ENCODE measurements at regions of chr10 and their contacts with region 1.

Region 1: DNA sequence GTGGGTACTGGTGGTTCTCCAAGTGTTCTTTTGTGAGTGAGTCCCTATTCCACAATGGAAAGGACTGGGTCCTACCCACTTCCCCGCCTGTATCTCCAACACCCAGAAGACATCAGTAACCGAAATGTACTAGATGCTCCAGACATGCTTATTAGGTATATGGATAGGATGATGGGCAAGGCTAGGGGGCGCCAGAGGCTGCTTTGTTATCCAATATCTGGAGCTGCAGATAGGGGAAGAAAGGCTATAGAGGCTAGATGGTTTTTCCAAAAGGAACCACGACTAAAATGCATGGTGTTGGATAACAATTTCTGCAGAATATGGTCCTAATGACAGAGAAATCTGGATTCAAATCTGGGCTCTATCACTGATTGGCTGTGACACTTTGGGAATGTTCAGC is 56.2 kb upstream of the TM9SF3 start:
- DNase-seq: peak; percentile 92
- H3K4me3 Mint-ChIP-seq: no peak overlapping the region
- H3K27ac Mint-ChIP-seq: no peak overlapping the region
- H3K4me1 Mint-ChIP-seq: peaks cover 14% of the 10 kb centered on the region
- H3K27me3 Mint-ChIP-seq: no peaks in the 10 kb centered on the region

Region 2: DNA sequence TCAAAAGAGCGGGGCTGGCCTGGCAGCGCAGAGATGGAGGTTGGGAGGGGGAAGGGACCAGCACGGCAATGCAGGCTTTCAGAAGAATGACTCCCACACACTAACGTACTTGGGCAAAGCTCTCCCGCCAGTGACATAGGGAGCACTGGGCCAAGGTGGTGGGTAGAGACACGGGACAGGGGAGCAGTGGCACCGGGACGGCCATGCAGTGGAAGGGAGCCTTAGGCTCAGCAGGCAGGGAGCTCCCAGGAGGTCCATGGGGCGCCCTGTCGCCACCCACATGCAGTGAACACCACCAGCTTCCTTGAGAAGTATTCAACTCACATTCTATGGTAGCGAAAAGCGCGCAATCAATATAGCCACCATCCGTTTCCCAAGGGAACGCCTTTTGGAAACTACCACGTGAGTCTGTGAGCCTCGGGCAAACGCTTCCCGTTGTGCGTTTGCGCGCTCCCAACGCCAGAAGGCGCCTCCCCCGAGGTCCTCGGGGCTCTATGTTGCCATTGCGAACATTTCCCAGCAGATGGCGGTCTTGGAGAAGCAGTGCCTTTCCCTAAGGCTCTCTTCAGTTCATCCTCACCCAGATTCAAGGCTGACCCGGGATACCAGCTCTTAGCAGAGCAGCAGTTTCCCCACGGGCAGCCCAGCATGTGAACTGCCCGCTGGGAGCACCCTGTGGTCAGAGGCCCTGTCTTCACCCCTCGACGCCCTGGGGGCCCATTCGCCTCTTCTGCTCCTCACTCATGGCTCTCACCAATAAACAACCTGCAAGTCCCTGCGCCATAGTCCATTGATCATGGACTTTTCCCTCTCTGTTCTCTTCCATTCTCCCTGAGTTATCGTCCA is 267.8 kb before region 1 on chr10:
- CTCF ChIA-PET with region 1: interaction called, 5 read pairs
- intact Hi-C with region 1: loop called (anchors 2 kb)
- DNase-seq: peak; percentile 89
- H3K4me3 Mint-ChIP-seq: peak overlapping the region; percentile 74
- H3K27ac Mint-ChIP-seq: no peak overlapping the region
- H3K4me1 Mint-ChIP-seq: peaks cover 6% of the 10 kb centered on the region
- H3K27me3 Mint-ChIP-seq: peaks cover 3% of the 10 kb centered on the region

Region 3: GRCh38 chr10:96695366-96695765 is 52.4 kb after region 1 on chr10:
- CTCF ChIA-PET with region 1: no interaction called
- intact Hi-C with region 1: loop called (anchors 1 kb)
- DNase-seq: peak; percentile 55
- H3K4me3 Mint-ChIP-seq: no peak overlapping the region
- H3K27ac Mint-ChIP-seq: peak overlapping the region; percentile 68
- H3K4me1 Mint-ChIP-seq: peaks cover 23% of the 10 kb centered on the region
- H3K27me3 Mint-ChIP-seq: no peaks in the 10 kb centered on the region

Region 4: DNA sequence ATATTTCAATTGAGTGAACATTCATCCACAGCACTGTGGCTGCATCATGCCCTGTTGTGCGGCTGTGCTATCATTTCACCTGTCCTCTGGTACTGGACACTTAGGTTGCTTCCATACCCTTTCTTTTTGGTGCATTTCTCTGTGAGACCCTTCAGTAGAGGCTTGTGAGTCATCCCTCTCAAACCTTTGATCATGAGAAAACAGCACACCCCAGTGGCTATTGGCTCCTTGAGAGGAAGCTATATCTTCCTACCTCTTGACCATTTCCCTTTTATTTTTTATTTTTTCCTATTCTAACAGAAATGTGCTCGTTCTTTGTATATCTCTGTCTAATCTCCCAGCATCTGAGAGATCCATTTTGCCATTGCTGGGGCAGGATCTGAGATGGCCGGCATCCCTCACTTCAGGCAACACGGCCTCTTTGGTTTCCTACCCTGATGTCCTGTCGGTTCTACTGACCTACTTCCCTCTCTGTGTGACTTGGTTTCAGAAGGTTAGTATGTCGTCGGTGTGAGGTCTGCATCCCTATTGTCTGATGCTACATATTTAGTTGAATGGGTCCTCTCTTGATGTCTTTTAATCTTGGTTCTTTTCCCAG is 101.1 kb after region 1 on chr10:
- CTCF ChIA-PET with region 1: interaction called, 3 read pairs
- intact Hi-C with region 1: loop called (anchors 2 kb)
- DNase-seq: no peak
- H3K4me3 Mint-ChIP-seq: no peak overlapping the region
- H3K27ac Mint-ChIP-seq: no peak overlapping the region
- H3K4me1 Mint-ChIP-seq: peaks cover 6% of the 10 kb centered on the region
- H3K27me3 Mint-ChIP-seq: no peaks in the 10 kb centered on the region

Region 5: GRCh38 chr10:96910488-96911395 is 267.8 kb after region 1 on chr10:
- CTCF ChIA-PET with region 1: no interaction called
- intact Hi-C with region 1: loop called (anchors 5 kb)
- DNase-seq: peak; percentile 29
- H3K4me3 Mint-ChIP-seq: no peak overlapping the region
- H3K27ac Mint-ChIP-seq: no peak overlapping the region
- H3K4me1 Mint-ChIP-seq: peaks cover 20% of the 10 kb centered on the region
- H3K27me3 Mint-ChIP-seq: no peaks in the 10 kb centered on the region

Region 6: GRCh38 chr10:97318772-97319651 is 676.0 kb after region 1 on chr10 and contains the start of gene FRAT1:
- CTCF ChIA-PET with region 1: no interaction called
- intact Hi-C with region 1: no loop called
- DNase-seq: peak; percentile 89
- H3K4me3 Mint-ChIP-seq: peak within 1 kb of the TSS; percentile 87
- H3K27ac Mint-ChIP-seq: peak within 1 kb of the TSS; percentile 95
- H3K4me1 Mint-ChIP-seq: peaks cover 23% of the 10 kb centered on the region
- H3K27me3 Mint-ChIP-seq: no peaks in the 10 kb centered on the region
- total RNA-seq, gene FRAT1: 2.3 to 3.0 TPM

Measured in activated naive CD4-positive, alpha-beta T cell treated with anti-CD3 and anti-CD28 coated beads for 36 hours (primary cell).